Sigmoid colon (tissue), 7 donors: ENCODE measurements at regions of chr17 and their contacts with region 1.

Region 1: GRCh38 chr17:44331249-44331760 is 6.7 kb upstream of the SLC25A39 start:
- DNase-seq: no peak
- H3K4me3 ChIP-seq: no peak overlapping the region
- H3K27ac ChIP-seq: no peak overlapping the region
- H3K4me1 ChIP-seq: peaks cover 0 to 14% (median 8%) of the 10 kb centered on the region in 4 donors
- H3K27me3 ChIP-seq: no peaks in the 10 kb centered on the region
- CTCF ChIP-seq: peak; percentile 66 to 81 (median 72)
- EP300 ChIP-seq: no peak
- POLR2A ChIP-seq: no peak

Region 2: GRCh38 chr17:44210342-44211192 is 120.7 kb before region 1 on chr17:
- intact Hi-C with region 1: loop called (anchors 1 kb)
- DNase-seq: peak; percentile 96
- H3K4me3 ChIP-seq: peak overlapping the region in 2 of 4 donors; percentile 1 to 21
- H3K27ac ChIP-seq: peak overlapping the region; percentile 65 to 74 (median 70)
- H3K4me1 ChIP-seq: peaks cover 0 to 38% (median 15%) of the 10 kb centered on the region in 4 donors
- H3K27me3 ChIP-seq: no peaks in the 10 kb centered on the region
- CTCF ChIP-seq: peak; percentile 95 to 99 (median 98)
- EP300 ChIP-seq: no peak
- POLR2A ChIP-seq: no peak